ENCODE measurements at regions of chr1 and their contacts with region 1.

Region 1: GRCh38 chr1:203340112-203340804 is 10.7 kb downstream of the FMOD start:
- DNase-seq: peak; percentile 76
- H3K4me3 ChIP-seq: no peak overlapping the region
- H3K27ac ChIP-seq: no peak overlapping the region
- H3K4me1 ChIP-seq: no peaks in the 10 kb centered on the region
- H3K27me3 ChIP-seq: peaks cover 33 to 42% of the 10 kb centered on the region in 2 experiments
- CTCF ChIP-seq: peak; percentile 82 to 89
- POLR2A ChIP-seq: no peak

Region 2: GRCh38 chr1:203273206-203273868 is 66.9 kb before region 1 on chr1:
- CTCF ChIA-PET with region 1: interaction called, 1,014 read pairs
- POLR2A ChIA-PET with region 1: no interaction called
- dilution Hi-C with region 1: no loop called
- intact Hi-C with region 1: loop called (anchors 1 kb)
- DNase-seq: peak; percentile 76
- H3K4me3 ChIP-seq: no peak overlapping the region
- H3K27ac ChIP-seq: no peak overlapping the region
- H3K4me1 ChIP-seq: peaks cover 5% of the 10 kb centered on the region
- H3K27me3 ChIP-seq: peaks cover 4 to 6% of the 10 kb centered on the region in 2 experiments
- CTCF ChIP-seq: peak; percentile 96 to 97
- POLR2A ChIP-seq: no peak

Region 3: DNA sequence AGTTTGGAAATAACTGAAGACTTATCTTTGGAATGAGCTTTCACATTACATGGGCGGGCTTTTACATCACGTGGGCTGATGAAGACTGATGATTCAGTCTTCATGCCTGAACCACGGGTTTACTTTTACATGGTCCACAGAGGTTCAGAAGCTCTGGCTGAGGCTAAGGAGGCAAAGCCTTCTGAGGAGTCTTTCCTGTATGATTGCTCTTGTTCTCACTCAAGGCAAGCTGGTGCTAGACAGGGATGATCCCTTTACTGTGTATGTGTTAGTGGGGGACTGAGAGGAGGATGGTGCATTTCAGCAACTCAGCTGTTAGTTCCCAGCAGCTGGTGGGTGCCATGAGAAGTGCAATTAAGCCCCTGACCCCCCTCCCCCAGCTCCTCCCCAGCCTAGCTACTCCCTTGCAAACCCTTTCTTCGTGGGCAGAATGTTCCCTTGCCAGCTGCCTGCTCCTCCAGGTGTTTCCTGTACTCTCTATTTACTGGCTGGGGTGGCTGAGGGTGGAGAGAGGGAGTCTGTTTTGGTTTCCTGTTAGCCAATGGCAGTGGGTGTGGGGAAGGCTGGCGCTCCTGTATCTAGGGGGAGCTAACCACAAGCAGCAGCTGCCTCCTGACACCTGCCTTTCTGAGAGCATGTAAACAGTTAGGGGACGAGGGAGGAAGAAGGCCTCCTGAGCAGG is 19.5 kb before region 1 on chr1:
- CTCF ChIA-PET with region 1: interaction called, 60 read pairs
- POLR2A ChIA-PET with region 1: no interaction called
- dilution Hi-C with region 1: no loop called
- intact Hi-C with region 1: no loop called
- DNase-seq: peak; percentile 94
- H3K4me3 ChIP-seq: no peak overlapping the region
- H3K27ac ChIP-seq: peak overlapping the region; percentile 2
- H3K4me1 ChIP-seq: peaks cover 24% of the 10 kb centered on the region
- H3K27me3 ChIP-seq: peaks cover 12 to 25% of the 10 kb centered on the region in 2 experiments
- CTCF ChIP-seq: no peak
- POLR2A ChIP-seq: peak; percentile 29

Region 4: DNA sequence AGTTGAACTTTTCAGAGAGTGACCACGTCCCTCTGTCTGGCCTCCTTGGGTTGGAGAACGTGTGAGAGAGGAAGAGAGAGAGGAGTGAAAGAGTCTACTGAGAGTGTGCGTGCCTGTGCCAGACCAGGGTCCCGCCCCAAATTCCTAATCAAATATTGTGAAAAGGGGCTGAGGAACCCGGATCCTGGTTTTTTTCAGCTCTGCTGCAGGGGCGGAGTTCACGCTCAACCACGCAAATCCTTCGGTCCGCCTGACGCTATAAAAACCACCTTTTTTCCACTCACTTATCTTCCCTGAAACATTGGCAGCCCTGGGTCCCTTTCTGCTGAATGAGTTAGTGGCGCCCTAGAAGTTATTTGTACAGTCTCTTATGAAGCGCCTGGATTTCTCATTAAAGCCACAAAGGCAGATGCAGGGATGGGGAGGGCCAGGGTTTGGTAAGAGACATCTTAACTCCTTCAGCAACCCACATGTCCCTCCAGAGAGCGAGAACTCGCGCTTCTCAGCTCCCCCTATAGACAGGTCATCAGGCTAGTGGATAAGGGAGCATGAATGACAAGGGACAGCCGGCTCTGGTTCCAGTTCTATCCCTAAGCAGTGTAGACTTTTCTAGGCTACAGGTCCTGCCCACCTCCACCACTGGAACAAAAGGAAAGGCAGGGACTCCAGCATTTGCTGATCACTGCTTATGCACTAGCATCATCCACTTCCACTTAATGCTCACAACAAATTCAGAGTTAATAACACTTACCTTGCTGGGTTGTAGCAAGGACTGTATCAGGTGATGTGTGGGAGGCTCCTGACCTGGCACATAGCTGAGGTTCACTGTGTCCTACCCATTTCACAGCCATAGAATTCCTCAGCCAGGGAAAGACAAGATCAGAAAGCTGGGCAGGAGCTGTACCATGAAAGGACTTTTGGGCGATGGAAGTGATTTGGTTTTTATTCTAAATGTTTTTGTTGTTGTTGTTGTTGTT is 11.1 kb after region 1 on chr1 and contains the start of gene FMOD:
- CTCF ChIA-PET with region 1: interaction called, 68 read pairs
- POLR2A ChIA-PET with region 1: no interaction called
- dilution Hi-C with region 1: no loop called
- intact Hi-C with region 1: no loop called
- DNase-seq: no peak
- H3K4me3 ChIP-seq: no peak within 1 kb of the TSS
- H3K27ac ChIP-seq: no peak within 1 kb of the TSS
- H3K4me1 ChIP-seq: no peaks in the 10 kb centered on the region
- H3K27me3 ChIP-seq: peaks cover 10 to 34% of the 10 kb centered on the region in 2 experiments
- CTCF ChIP-seq: no peak
- POLR2A ChIP-seq: no peak
- total RNA-seq, gene FMOD: 0.11 TPM in 1 of 2 replicates, not detected in the other

Region 5: GRCh38 chr1:203440771-203441170 is 100.5 kb after region 1 on chr1:
- CTCF ChIA-PET with region 1: interaction called, 136 read pairs
- POLR2A ChIA-PET with region 1: no interaction called
- dilution Hi-C with region 1: no loop called
- intact Hi-C with region 1: loop called (anchors 1 kb)
- DNase-seq: peak; percentile 65
- H3K4me3 ChIP-seq: no peak overlapping the region
- H3K27ac ChIP-seq: no peak overlapping the region
- H3K4me1 ChIP-seq: peaks cover 5% of the 10 kb centered on the region
- H3K27me3 ChIP-seq: peaks cover 20 to 39% of the 10 kb centered on the region in 2 experiments
- CTCF ChIP-seq: peak; percentile 27 to 62
- POLR2A ChIP-seq: no peak

Region 6: DNA sequence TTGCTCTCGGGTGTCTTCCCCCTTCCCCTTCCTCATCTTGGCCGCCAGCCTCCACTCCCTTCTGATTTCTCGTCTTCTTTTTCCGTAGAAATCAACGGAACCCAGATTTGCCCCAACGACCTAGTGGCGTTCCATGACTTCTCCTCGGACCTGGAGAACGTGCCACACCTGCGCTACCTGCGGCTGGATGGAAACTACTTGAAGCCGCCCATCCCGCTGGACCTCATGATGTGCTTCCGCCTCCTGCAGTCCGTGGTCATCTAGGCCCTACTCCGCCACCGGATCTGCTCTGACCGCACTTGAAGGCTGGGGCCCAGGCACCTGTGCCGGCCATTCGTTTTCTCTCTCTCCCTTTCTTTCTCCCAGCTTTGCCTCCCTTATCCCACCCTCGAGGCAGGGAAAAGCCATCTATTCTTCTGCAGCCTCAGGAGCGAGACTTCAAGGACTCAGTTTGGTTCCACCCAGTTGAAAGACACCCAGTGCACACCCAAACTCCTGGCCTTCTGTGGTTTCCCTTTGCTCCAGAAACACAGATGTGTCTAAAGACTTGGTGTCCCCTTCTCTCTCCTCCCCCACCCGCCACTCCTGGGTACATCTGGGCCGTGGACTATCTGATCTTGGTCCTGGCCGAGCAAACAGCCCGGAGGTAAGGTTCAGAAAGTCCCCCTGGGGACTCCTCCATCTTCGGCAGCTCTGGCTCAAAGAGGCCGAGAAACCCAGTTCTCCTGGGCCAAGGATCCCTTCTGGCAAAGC is 146.5 kb after region 1 on chr1:
- CTCF ChIA-PET with region 1: interaction called, 125 read pairs
- POLR2A ChIA-PET with region 1: no interaction called
- dilution Hi-C with region 1: no loop called
- intact Hi-C with region 1: loop called (anchors 1 kb)
- DNase-seq: no peak
- H3K4me3 ChIP-seq: peak overlapping the region in 2 of 3 experiments; percentile 37 to 38
- H3K27ac ChIP-seq: peak overlapping the region; percentile 52
- H3K4me1 ChIP-seq: no peaks in the 10 kb centered on the region
- H3K27me3 ChIP-seq: peaks cover 5 to 8% of the 10 kb centered on the region in 2 experiments
- CTCF ChIP-seq: no peak
- POLR2A ChIP-seq: no peak